ENCODE measurements at regions of chr7 and their contacts with region 1.

Region 1: GRCh38 chr7:30134611-30135545 is at the start of gene MTURN:
- DNase-seq: peak; percentile 64 to 96 (median 83)
- ATAC-seq: peak; percentile 76
- H3K4me3 ChIP-seq: peak within 1 kb of the TSS; percentile 94
- H3K4me3 Mint-ChIP-seq: peak within 1 kb of the TSS; percentile 94
- H3K27ac ChIP-seq: no peak within 1 kb of the TSS
- H3K27ac Mint-ChIP-seq: peak within 1 kb of the TSS; percentile 89
- H3K4me1 ChIP-seq: peaks cover 20% of the 10 kb centered on the region
- H3K4me1 Mint-ChIP-seq: peaks cover 20% of the 10 kb centered on the region
- H3K27me3 ChIP-seq: no peaks in the 10 kb centered on the region
- H3K27me3 Mint-ChIP-seq: peaks cover 6% of the 10 kb centered on the region
- CTCF ChIP-seq: no peak
- total RNA-seq, gene MTURN: 38.4 to 38.9 TPM

Region 2: GRCh38 chr7:30148951-30149471 is 14.1 kb after region 1 on chr7:
- CTCF ChIA-PET with region 1: no interaction called
- POLR2A ChIA-PET with region 1: interaction called, 14 read pairs
- intact Hi-C with region 1: no loop called
- DNase-seq: peak in 8 of 14 experiments; percentile 11 to 70 (median 54)
- ATAC-seq: peak; percentile 93
- H3K4me3 ChIP-seq: peak overlapping the region; percentile 37
- H3K4me3 Mint-ChIP-seq: no peak overlapping the region
- H3K27ac ChIP-seq: no peak overlapping the region
- H3K27ac Mint-ChIP-seq: no peak overlapping the region
- H3K4me1 ChIP-seq: peaks cover 15% of the 10 kb centered on the region
- H3K4me1 Mint-ChIP-seq: peaks cover 5% of the 10 kb centered on the region
- H3K27me3 ChIP-seq: no peaks in the 10 kb centered on the region
- H3K27me3 Mint-ChIP-seq: no peaks in the 10 kb centered on the region
- CTCF ChIP-seq: no peak

Region 3: GRCh38 chr7:30164567-30164966 is 29.7 kb after region 1 on chr7:
- CTCF ChIA-PET with region 1: no interaction called
- POLR2A ChIA-PET with region 1: interaction called, 12 read pairs
- intact Hi-C with region 1: no loop called
- DNase-seq: peak in 3 of 14 experiments; percentile 43 to 51 (median 46)
- ATAC-seq: no peak
- H3K4me3 ChIP-seq: no peak overlapping the region
- H3K4me3 Mint-ChIP-seq: no peak overlapping the region
- H3K27ac ChIP-seq: no peak overlapping the region
- H3K27ac Mint-ChIP-seq: no peak overlapping the region
- H3K4me1 ChIP-seq: peaks cover 13% of the 10 kb centered on the region
- H3K4me1 Mint-ChIP-seq: peaks cover 36% of the 10 kb centered on the region
- H3K27me3 ChIP-seq: no peaks in the 10 kb centered on the region
- H3K27me3 Mint-ChIP-seq: no peaks in the 10 kb centered on the region
- CTCF ChIP-seq: peak; percentile 34

Region 4: GRCh38 chr7:30193336-30193943 is 58.6 kb after region 1 on chr7:
- CTCF ChIA-PET with region 1: no interaction called
- POLR2A ChIA-PET with region 1: no interaction called
- intact Hi-C with region 1: no loop called
- DNase-seq: no peak
- ATAC-seq: no peak
- H3K4me3 ChIP-seq: no peak overlapping the region
- H3K4me3 Mint-ChIP-seq: no peak overlapping the region
- H3K27ac ChIP-seq: no peak overlapping the region
- H3K27ac Mint-ChIP-seq: no peak overlapping the region
- H3K4me1 ChIP-seq: no peaks in the 10 kb centered on the region
- H3K4me1 Mint-ChIP-seq: no peaks in the 10 kb centered on the region
- H3K27me3 ChIP-seq: no peaks in the 10 kb centered on the region
- H3K27me3 Mint-ChIP-seq: no peaks in the 10 kb centered on the region
- CTCF ChIP-seq: no peak

Region 5: DNA sequence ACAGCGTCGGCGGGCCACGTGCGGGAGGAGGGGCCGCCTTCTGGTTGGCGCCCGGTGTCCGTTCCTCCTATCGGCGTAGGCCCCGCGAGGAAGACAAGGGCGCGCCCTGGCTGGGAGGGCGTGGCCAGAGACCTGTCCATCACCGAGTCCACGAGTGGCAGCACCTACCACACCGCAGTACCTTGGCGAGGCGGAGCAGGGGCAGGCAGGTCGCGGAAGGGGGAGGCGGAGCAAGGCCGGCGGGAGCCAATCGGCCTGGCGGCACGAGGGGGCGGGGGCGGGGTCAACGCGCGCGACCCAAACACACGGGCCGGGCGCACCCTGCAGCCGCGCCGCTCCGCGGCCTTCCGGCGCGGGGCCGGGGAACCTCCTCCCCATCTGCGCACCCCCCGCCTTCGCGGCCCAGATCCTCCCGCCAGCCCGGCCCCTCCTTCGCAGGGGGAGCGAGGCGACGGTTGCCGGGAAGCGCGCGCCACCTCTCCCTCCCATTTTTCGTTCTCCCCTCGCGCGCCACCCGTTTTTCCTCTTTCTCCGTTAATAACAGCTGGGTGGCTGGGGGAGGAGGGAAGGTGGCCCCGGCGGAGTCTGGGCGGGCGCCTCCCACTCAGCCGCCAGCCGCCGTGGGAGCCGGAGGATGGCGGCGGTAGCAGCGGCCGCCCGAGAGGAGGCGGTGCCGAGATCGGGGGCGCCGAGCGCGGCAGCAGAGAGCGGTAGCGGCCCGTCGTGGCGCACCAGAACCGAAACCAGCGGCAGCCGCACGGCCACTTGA is 149.6 kb after region 1 on chr7 and contains the start of gene ZNRF2:
- CTCF ChIA-PET with region 1: no interaction called
- POLR2A ChIA-PET with region 1: interaction called, 13 read pairs
- intact Hi-C with region 1: loop called in 1 of 2 experiments (anchors 10 kb)
- DNase-seq: peak; percentile 97 to 100 (median 99)
- ATAC-seq: peak; percentile 85
- H3K4me3 ChIP-seq: peak within 1 kb of the TSS; percentile 85
- H3K4me3 Mint-ChIP-seq: peak within 1 kb of the TSS; percentile 94
- H3K27ac ChIP-seq: peak within 1 kb of the TSS; percentile 66 to 78
- H3K27ac Mint-ChIP-seq: peak within 1 kb of the TSS; percentile 94
- H3K4me1 ChIP-seq: peaks cover 7% of the 10 kb centered on the region
- H3K4me1 Mint-ChIP-seq: peaks cover 40% of the 10 kb centered on the region
- H3K27me3 ChIP-seq: no peaks in the 10 kb centered on the region
- H3K27me3 Mint-ChIP-seq: no peaks in the 10 kb centered on the region
- CTCF ChIP-seq: peak; percentile 44
- total RNA-seq, gene ZNRF2: 20.4 to 23.6 TPM

Region 6: DNA sequence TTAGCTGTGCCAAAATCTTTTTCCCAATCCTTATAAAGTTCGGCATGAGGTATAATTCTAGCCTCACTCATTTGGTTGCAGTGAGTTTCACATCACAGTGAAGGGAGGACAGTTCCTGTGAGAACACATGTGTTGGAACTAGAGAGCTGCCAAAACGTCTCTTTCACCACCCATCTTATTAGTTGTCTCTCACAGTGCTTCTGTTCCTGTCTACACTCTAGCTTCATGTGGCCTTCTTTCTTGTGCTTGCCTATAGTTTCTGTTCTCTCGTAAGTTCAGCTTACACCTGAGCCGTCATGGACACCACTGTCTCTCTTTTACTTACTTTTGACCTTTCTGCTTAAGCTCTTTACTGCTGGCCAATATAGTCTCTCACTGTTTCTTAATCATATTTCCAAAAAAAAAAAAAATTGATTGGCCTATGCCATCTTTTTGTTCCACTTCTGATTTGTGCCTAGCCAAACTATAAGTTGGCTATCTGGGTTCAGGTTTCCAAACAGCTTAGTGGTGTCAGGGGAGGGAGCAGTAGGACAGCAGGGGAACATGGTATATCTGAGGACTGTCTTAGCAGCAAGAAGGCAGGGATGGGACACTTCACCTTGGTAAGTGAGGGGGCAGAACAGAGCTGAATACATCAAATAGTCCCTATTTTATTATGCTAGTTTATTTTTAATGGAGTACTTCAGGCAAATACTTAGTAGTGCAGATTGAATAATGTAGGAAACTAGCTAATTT is 187.6 kb after region 1 on chr7:
- CTCF ChIA-PET with region 1: no interaction called
- POLR2A ChIA-PET with region 1: interaction called, 13 read pairs
- intact Hi-C with region 1: no loop called
- DNase-seq: peak in 5 of 14 experiments; percentile 7 to 71 (median 59)
- ATAC-seq: peak; percentile 78
- H3K4me3 ChIP-seq: peak overlapping the region; percentile 36
- H3K4me3 Mint-ChIP-seq: peak overlapping the region; percentile 88
- H3K27ac ChIP-seq: peak overlapping the region; percentile 70 to 79
- H3K27ac Mint-ChIP-seq: peak overlapping the region; percentile 90
- H3K4me1 ChIP-seq: peaks cover 10% of the 10 kb centered on the region
- H3K4me1 Mint-ChIP-seq: peaks cover 83% of the 10 kb centered on the region
- H3K27me3 ChIP-seq: no peaks in the 10 kb centered on the region
- H3K27me3 Mint-ChIP-seq: no peaks in the 10 kb centered on the region
- CTCF ChIP-seq: no peak

Region 7: GRCh38 chr7:30504347-30505173 is 369.7 kb after region 1 on chr7 and contains the start of gene GGCT:
- CTCF ChIA-PET with region 1: no interaction called
- POLR2A ChIA-PET with region 1: no interaction called
- intact Hi-C with region 1: loop called in 1 of 2 experiments (anchors 5 kb)
- DNase-seq: peak; percentile 93 to 98 (median 95)
- ATAC-seq: peak; percentile 98
- H3K4me3 ChIP-seq: peak within 1 kb of the TSS; percentile 88
- H3K4me3 Mint-ChIP-seq: peak within 1 kb of the TSS; percentile 94
- H3K27ac ChIP-seq: peak within 1 kb of the TSS; percentile 42 to 57
- H3K27ac Mint-ChIP-seq: peak within 1 kb of the TSS; percentile 74
- H3K4me1 ChIP-seq: peaks cover 19% of the 10 kb centered on the region
- H3K4me1 Mint-ChIP-seq: peaks cover 29% of the 10 kb centered on the region
- H3K27me3 ChIP-seq: no peaks in the 10 kb centered on the region
- H3K27me3 Mint-ChIP-seq: no peaks in the 10 kb centered on the region
- CTCF ChIP-seq: no peak
- total RNA-seq, gene GGCT: 6.3 to 6.6 TPM